ENCODE measurements at regions of chr16 and their contacts with region 1.

Region 1: DNA sequence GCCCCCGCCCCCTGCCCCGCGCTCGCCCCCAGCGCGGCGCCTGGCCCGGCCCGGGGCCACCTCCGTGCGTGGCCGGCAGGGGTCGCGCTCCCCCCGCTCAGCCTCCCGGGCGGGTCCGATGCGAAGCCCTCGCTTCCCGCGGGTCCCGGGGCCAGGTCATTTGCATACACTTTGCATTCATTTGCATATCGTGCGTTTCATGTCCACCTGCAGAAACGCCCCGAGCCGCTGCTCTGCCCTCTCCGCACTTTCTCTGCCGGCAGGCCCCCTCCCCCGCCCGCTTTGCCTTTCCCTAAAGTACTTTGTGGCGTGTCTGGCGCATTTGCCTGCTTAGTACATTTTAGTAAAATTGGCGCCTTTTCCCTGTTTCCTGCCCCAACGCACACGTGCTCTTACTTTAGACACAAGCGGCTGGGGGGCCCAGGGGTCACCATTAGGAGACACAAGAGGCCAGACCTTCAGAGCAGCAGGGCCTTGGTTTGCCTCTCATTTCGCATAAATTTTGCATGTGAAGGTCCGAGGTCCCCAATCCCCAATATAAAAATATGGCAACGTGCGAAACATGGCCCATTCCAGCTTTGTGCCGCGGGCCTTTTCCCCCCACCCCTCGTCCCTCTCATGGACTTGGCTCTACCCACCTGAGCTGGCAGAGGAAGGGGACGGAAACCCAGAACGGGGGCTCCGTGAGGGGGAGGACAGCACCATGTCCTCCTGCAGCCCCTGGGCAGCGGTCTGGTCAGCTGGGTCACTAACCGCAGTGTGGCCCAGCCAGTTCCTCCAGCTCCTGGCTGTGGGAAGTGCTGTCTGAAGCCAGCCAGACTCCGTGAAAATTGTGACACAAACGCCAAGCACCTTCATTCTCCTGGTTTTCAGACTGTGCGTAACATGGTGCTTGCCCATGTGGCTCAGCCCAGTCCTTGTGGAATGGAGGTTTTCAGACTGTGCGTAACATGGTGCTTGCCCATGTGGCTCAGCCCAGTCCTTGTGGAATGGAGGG is 34.8 kb downstream of the CBFA2T3 start:
- DNase-seq: peak in 4 of 5 donors; percentile 37 to 48 (median 42)
- H3K4me3 ChIP-seq: no peak overlapping the region
- H3K4me3 Mint-ChIP-seq: peak overlapping the region in 7 of 8 donors; percentile 41 to 70 (median 52)
- H3K27ac ChIP-seq: no peak overlapping the region
- H3K27ac Mint-ChIP-seq: peak overlapping the region in 1 of 7 donors; percentile 37
- H3K4me1 ChIP-seq: peaks cover 13% of the 10 kb centered on the region
- H3K4me1 Mint-ChIP-seq: peaks cover 0 to 14% (median 9%) of the 10 kb centered on the region in 4 donors
- H3K27me3 ChIP-seq: peaks cover 17% of the 10 kb centered on the region
- H3K27me3 Mint-ChIP-seq: peaks cover 20 to 33% of the 10 kb centered on the region in 2 donors

Region 2: DNA sequence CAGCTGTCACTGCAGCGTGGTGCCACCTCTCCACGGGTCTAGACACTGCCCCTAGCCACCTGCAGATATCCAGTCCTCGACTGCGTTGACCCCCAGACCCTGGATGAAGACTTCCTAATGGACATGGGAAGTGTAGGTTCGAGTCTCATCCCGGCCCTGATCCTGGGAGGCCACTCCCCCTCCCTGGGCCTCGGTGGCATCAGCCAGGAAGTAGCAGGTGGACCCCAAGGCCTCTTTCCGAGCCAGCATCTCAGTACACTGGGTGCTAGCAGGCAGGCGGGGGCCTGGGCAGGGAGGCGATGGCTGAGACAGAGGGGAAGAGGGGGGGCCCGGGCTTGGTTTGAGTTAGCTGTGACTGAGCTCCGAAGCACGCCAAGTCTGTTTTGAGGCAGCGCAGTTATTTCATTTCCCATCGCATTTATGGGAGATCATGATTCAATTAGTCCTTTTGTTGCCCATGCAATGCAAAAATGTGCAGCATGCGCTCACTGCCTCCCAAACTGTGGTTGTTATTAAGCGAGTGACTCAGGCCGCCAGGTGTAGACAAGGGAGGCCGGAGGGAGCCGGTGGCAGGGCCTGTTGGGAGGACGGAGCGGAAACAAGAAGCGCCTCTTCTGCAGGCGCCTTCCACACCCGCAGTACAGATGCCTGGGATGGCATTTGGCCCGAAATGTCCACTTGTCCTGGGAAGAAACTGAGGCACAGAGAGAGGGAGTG is 584.7 kb before region 1 on chr16:
- CTCF ChIA-PET with region 1: no interaction called
- POLR2A ChIA-PET with region 1: no interaction called
- intact Hi-C with region 1: no loop called
- DNase-seq: no peak
- H3K4me3 ChIP-seq: no peak overlapping the region
- H3K4me3 Mint-ChIP-seq: no peak overlapping the region
- H3K27ac ChIP-seq: no peak overlapping the region
- H3K27ac Mint-ChIP-seq: no peak overlapping the region
- H3K4me1 ChIP-seq: no peaks in the 10 kb centered on the region
- H3K4me1 Mint-ChIP-seq: no peaks in the 10 kb centered on the region
- H3K27me3 ChIP-seq: no peaks in the 10 kb centered on the region
- H3K27me3 Mint-ChIP-seq: peaks cover 6 to 10% of the 10 kb centered on the region in 2 donors

Region 3: GRCh38 chr16:89217388-89218191 is 275.4 kb after region 1 on chr16 and contains the start of gene ZNF778:
- CTCF ChIA-PET with region 1: interaction called, 9 read pairs
- POLR2A ChIA-PET with region 1: interaction called, 4 read pairs
- intact Hi-C with region 1: loop called (anchors 1 kb)
- DNase-seq: peak; percentile 83 to 87 (median 85)
- H3K4me3 ChIP-seq: peak within 1 kb of the TSS; percentile 76 to 91
- H3K4me3 Mint-ChIP-seq: peak within 1 kb of the TSS; percentile 73 to 94 (median 92)
- H3K27ac ChIP-seq: peak within 1 kb of the TSS; percentile 94
- H3K27ac Mint-ChIP-seq: peak within 1 kb of the TSS; percentile 64 to 98 (median 92)
- H3K4me1 ChIP-seq: peaks cover 21% of the 10 kb centered on the region
- H3K4me1 Mint-ChIP-seq: peaks cover 10 to 37% (median 26%) of the 10 kb centered on the region in 4 donors
- H3K27me3 ChIP-seq: no peaks in the 10 kb centered on the region
- H3K27me3 Mint-ChIP-seq: no peaks in the 10 kb centered on the region
- total RNA-seq, gene ZNF778: 13.1 to 15.9 TPM